Astrocyte of the cerebellum (primary cell): ENCODE measurements at regions of chr4 and their contacts with region 1.

Region 1: GRCh38 chr4:158121187-158121586 is 51.6 kb downstream of the GASK1B start:
- DNase-seq: peak; percentile 73
- H3K4me3 ChIP-seq: no peak overlapping the region
- CTCF ChIP-seq: no peak

Region 2: DNA sequence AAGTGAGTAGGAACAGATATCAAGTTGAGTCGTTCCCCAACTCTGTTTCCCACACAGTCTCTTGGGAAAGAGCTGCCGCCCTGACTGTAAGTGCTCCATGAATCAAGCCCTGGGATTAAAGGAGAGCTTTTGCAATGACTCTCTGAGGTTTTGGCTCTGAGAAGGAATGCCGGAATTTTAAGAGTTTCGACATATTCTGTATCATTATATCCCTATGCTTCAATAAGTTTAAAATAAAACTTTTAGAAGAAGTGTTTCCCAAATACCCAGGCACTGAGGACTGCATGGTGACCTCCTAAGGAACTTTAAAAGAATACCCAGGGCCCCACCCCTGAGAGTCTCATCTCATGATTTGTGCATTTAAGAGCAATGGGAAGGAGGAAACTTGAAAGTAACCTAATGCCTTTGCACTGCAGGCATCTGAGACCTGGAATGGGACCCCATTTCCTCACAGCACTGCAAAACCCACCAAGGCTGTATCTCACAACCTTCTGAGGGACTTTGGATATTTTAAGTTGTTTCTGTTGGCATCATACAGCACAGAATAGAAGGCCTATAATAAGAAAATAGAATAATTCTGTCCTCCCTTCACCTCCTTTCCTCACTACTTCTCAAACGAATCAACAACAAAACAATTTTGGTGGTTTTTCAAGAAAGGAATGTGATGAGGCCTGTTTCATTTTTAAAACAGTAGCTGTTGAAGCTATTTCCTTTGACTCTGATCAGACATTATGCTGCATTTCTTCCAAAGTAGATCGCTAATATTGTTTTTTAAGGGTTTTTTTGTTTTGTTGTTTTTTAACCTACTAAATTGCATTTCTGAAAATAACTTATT is 69.6 kb before region 1 on chr4:
- in situ Hi-C with region 1: no loop called
- DNase-seq: peak; percentile 75
- H3K4me3 ChIP-seq: no peak overlapping the region
- CTCF ChIP-seq: no peak

Region 3: GRCh38 chr4:158159054-158159717 is 38.0 kb after region 1 on chr4:
- in situ Hi-C with region 1: loop called (anchors 5 kb)
- DNase-seq: peak; percentile 49
- H3K4me3 ChIP-seq: no peak overlapping the region
- CTCF ChIP-seq: no peak